ENCODE measurements at regions of chr13 and their contacts with region 1.

Region 1: GRCh38 chr13:89169951-89170350 is 1498.8 kb downstream of the SLITRK5 start:
- DNase-seq: no peak
- ATAC-seq: peak in 1 of 8 donors; percentile 80
- H3K4me3 ChIP-seq: no peak overlapping the region
- H3K27ac ChIP-seq: no peak overlapping the region
- H3K4me1 ChIP-seq: no peaks in the 10 kb centered on the region
- H3K27me3 ChIP-seq: no peaks in the 10 kb centered on the region
- CTCF ChIP-seq: no peak

Region 2: DNA sequence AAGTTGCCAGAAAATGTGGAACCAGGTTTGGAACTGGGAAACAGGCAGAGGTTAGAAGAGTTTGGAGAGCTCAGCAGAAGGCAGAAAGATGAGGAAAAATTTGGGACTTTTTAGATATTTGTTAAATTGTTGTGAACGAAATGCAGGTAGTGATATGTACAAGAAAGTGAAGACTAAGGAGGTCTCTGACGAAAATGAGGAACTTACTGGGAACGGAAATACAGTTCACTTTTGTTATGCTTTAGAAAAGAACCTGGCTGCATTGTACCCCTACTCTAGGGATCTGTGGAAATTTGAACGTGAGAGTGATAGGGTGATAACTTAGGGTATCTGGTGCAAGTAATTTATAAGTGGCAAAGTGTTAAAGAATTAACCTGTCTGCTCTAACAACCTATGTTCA is 866.3 kb before region 1 on chr13:
- intact Hi-C with region 1: loop called in 1 of 10 experiments (anchors 5 kb)
- DNase-seq: no peak
- ATAC-seq: no peak
- H3K4me3 ChIP-seq: no peak overlapping the region
- H3K27ac ChIP-seq: no peak overlapping the region
- H3K4me1 ChIP-seq: no peaks in the 10 kb centered on the region
- H3K27me3 ChIP-seq: no peaks in the 10 kb centered on the region
- CTCF ChIP-seq: no peak

Region 3: GRCh38 chr13:89115307-89115706 is 54.6 kb before region 1 on chr13:
- intact Hi-C with region 1: no loop called
- DNase-seq: no peak
- ATAC-seq: no peak
- H3K4me3 ChIP-seq: no peak overlapping the region
- H3K27ac ChIP-seq: no peak overlapping the region
- H3K4me1 ChIP-seq: no peaks in the 10 kb centered on the region
- H3K27me3 ChIP-seq: no peaks in the 10 kb centered on the region
- CTCF ChIP-seq: no peak

Region 4: GRCh38 chr13:89883893-89884448 is 714.0 kb after region 1 on chr13:
- intact Hi-C with region 1: no loop called
- DNase-seq: peak in 1 of 2 donors; percentile 8
- ATAC-seq: no peak
- H3K4me3 ChIP-seq: peak overlapping the region in 1 of 10 donors; percentile 42
- H3K27ac ChIP-seq: no peak overlapping the region
- H3K4me1 ChIP-seq: no peaks in the 10 kb centered on the region
- H3K27me3 ChIP-seq: no peaks in the 10 kb centered on the region
- CTCF ChIP-seq: no peak

Region 5: GRCh38 chr13:90205911-90206310 is 1036.0 kb after region 1 on chr13:
- intact Hi-C with region 1: no loop called
- DNase-seq: no peak
- ATAC-seq: no peak
- H3K4me3 ChIP-seq: no peak overlapping the region
- H3K27ac ChIP-seq: no peak overlapping the region
- H3K4me1 ChIP-seq: peaks cover 0 to 14% (median 5%) of the 10 kb centered on the region in 9 donors
- H3K27me3 ChIP-seq: no peaks in the 10 kb centered on the region
- CTCF ChIP-seq: no peak

Measured in heart right ventricle (tissue), 16 donors.